ENCODE measurements at regions of chr3 and their contacts with region 1.

Region 1: DNA sequence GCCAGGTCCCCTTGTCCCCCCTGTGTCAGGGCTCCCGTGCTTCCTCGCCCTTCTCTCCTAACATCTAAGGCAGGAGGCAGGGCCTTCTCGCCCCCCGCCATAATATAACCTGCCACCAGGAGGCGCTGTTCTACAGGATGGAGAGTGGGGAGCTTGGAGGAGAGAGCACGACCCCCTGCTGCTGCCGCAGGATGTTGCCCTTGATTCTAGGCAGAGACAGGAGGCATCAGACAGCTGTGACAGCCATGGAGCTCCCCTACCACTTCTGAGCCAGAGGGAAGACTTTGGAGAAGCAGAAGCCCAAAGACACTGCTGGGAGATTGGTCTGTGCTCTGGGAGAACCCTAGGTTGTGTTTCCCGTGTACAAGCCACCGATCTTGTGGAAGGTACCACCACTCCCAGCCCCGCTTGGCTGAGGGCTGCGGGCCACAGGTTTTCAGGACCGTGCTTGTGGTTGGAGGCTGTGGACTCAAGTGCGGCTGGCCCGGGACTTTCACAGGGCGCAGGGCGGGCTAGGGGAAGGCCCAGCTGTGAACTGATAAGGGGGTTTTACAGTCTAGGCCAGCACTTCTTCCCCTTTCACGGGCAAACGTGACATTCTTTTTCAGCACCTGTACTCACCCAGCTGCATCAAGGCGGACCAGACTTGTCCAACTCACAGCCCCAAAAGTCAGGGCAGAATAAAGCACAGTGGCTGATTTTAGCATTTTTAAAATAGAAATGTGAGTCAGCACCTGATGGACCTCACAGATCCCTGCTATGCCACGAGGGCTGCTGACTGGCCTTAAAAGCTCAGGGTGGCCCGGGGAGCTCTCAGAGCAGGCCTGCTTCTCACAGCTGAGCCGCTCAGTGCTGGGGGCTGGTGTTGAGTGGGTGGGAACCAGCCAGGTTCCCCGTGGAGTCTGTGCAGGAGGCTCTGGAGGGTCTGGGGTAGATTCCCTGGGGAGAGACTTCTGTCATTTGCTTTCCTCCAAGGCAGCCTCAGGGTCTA is 2.6 kb upstream of the TIGIT start:
- DNase-seq: peak; percentile 98
- ATAC-seq: peak; percentile 74
- H3K4me3 Mint-ChIP-seq: peak overlapping the region; percentile 79
- H3K27ac Mint-ChIP-seq: peak overlapping the region; percentile 99
- H3K4me1 Mint-ChIP-seq: peaks cover 60% of the 10 kb centered on the region
- H3K27me3 Mint-ChIP-seq: no peaks in the 10 kb centered on the region

Region 2: DNA sequence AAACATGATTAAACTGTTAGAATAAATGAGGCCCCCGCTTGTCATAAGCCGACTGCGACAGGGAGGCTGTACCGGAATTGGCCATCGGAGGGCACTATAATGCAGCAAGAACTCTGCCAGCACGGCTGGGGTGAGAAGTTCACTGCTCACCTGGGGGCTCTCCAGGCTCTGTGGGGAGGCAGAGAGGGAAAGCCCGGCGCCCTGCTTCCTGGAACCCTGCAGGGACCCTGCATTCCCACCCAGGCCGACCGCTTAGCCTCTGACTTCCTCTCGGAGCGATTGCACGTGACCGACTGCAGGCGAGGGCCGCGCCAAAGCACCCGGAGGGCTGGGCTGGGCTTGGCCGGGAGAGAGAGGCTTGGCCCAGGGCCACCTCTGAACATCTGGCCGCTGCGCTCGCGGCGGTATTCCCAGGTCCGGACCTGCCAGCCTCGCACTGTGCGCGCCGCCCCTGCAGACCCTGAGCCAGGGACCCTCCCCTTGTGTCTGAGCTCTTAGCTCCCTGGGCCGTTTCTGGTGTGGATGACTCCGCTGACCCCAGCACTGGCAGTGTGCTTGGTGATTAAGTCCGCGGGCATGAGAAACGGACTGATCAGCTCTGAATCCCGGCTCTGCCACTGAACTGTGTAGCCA is 138.6 kb before region 1 on chr3:
- CTCF ChIA-PET with region 1: interaction called, 11 read pairs
- DNase-seq: peak; percentile 89
- ATAC-seq: peak; percentile 97
- H3K4me3 Mint-ChIP-seq: peak overlapping the region; percentile 24
- H3K27ac Mint-ChIP-seq: no peak overlapping the region
- H3K4me1 Mint-ChIP-seq: peaks cover 10% of the 10 kb centered on the region
- H3K27me3 Mint-ChIP-seq: no peaks in the 10 kb centered on the region

Region 3: GRCh38 chr3:114213627-114214541 is 77.3 kb before region 1 on chr3:
- CTCF ChIA-PET with region 1: interaction called, 152 read pairs
- DNase-seq: peak; percentile 88
- ATAC-seq: peak; percentile 67
- H3K4me3 Mint-ChIP-seq: no peak overlapping the region
- H3K27ac Mint-ChIP-seq: no peak overlapping the region
- H3K4me1 Mint-ChIP-seq: peaks cover 17% of the 10 kb centered on the region
- H3K27me3 Mint-ChIP-seq: no peaks in the 10 kb centered on the region

Region 4: DNA sequence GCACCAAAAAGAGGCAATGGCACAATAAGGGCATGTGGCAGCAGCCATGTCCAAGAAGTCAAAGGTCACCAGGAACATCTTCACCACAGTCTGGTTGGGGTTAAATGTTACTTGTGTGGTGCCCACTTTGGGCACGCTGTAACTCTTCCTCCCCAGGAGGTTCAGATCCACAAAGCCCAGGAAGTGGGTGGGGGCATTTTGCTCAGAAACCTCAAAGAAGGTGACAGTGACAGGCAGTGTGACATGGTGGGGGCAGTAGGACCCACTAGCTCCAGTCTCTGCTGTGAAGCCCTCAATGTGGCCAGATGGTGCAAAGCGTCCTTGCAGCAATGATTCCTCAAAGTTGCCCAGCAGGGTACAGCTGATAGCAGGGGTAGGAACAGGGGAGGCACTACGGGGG is 59.6 kb before region 1 on chr3:
- CTCF ChIA-PET with region 1: interaction called, 19 read pairs
- DNase-seq: peak; percentile 80
- ATAC-seq: peak; percentile 68
- H3K4me3 Mint-ChIP-seq: no peak overlapping the region
- H3K27ac Mint-ChIP-seq: peak overlapping the region; percentile 86
- H3K4me1 Mint-ChIP-seq: peaks cover 81% of the 10 kb centered on the region
- H3K27me3 Mint-ChIP-seq: no peaks in the 10 kb centered on the region

Region 5: GRCh38 chr3:114323546-114324254 is 32.5 kb after region 1 on chr3:
- CTCF ChIA-PET with region 1: interaction called, 14 read pairs
- DNase-seq: no peak
- ATAC-seq: peak; percentile 62
- H3K4me3 Mint-ChIP-seq: peak overlapping the region; percentile 16
- H3K27ac Mint-ChIP-seq: peak overlapping the region; percentile 79
- H3K4me1 Mint-ChIP-seq: peaks cover 78% of the 10 kb centered on the region
- H3K27me3 Mint-ChIP-seq: no peaks in the 10 kb centered on the region

Region 6: GRCh38 chr3:114418724-114419543 is 127.7 kb after region 1 on chr3:
- CTCF ChIA-PET with region 1: interaction called, 19 read pairs
- DNase-seq: no peak
- ATAC-seq: peak; percentile 88
- H3K4me3 Mint-ChIP-seq: no peak overlapping the region
- H3K27ac Mint-ChIP-seq: peak overlapping the region; percentile 31
- H3K4me1 Mint-ChIP-seq: peaks cover 18% of the 10 kb centered on the region
- H3K27me3 Mint-ChIP-seq: no peaks in the 10 kb centered on the region

Region 7: DNA sequence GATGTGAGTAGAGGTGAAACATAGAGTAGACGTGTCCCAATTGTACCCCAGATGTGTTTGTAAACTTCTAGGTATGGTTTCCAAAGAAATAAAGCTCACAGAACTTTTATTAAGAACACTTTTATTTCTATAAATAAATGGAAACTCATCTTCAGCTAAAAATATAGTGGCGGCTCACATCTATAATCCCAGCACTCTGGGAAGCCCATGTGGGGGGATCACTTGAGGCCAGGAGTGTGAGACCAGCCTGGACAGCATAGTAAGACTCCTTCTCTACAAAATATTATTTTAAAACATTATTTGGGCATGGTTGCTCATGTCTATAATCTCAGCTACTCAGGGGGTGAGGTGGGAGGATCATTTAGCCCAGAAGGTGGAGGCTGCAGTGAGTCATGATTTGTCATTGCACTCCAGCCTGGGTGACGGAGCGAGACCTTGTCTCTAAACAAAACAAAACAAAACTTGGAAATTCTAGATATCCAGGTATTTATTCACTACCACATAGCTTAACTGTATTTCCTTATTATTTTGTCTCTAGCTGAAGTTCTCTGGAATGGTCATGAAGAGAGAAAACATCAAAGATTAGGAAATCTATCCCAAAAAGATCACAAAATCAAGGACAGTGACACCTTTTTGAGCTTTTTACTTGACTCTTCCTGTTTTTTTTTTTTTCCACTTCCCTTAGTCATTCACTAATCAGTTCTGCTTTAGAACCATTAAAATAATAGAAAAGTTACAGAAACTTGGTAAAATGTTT is 260.7 kb after region 1 on chr3:
- CTCF ChIA-PET with region 1: no interaction called
- DNase-seq: no peak
- ATAC-seq: no peak
- H3K4me3 Mint-ChIP-seq: no peak overlapping the region
- H3K27ac Mint-ChIP-seq: no peak overlapping the region
- H3K4me1 Mint-ChIP-seq: no peaks in the 10 kb centered on the region
- H3K27me3 Mint-ChIP-seq: no peaks in the 10 kb centered on the region

Measured in activated CD8-positive, alpha-beta memory T cell treated with anti-CD3 and anti-CD28 coated beads, Interleukin-2, amount 10 ng/mL, durations not matched to agents 7 days and 5 days (primary cell).